ENCODE measurements at regions of chr10 and their contacts with region 1.

Region 1: GRCh38 chr10:110279407-110279986 is 25.2 kb downstream of the SMNDC1 start:
- DNase-seq: no peak

Region 2: DNA sequence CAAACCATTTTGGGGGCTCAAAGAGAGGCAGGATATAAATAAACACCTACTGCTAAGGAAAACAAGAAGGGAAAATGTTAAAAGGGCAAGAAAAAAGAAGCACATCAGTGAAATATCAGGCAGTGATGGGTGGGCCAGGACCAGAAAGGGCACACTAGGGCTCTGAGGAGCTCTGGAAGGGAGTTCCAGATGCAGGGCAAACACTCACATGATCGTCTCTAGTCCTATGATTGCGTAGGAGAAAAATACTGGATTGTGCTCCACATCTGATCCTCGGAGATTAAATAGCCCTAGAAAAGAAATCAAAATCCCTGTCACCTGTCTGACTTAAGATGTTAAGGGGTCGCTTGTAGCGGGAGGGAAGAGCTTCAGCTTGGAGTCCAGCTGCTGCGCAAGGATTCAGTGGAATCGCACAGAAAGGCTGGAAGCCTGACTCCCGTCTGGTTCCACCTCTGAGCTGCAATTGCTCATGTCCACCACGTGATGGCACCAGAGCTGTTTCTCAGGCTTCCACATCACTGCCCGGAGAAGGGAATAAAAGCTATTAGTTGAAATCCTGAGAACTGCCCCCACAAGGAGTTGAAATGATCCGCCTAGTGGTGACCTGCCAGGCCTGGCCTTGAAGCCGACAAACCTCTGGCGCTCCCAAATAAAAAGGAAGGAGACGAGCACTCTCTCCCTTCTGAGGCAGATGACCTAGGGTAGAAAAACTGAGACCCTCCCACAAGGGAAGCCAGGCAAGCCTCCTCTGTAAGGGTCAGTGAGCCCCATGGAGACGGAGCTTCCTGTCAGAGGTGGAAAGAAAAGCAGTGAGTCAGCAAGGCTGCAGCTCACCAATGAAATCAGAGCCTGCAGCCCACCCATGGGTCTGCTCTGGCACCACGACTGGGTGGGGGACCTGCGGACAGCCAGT is 395.4 kb before region 1 on chr10:
- intact Hi-C with region 1: loop called (anchors 2 kb)
- DNase-seq: peak; percentile 86

Region 3: DNA sequence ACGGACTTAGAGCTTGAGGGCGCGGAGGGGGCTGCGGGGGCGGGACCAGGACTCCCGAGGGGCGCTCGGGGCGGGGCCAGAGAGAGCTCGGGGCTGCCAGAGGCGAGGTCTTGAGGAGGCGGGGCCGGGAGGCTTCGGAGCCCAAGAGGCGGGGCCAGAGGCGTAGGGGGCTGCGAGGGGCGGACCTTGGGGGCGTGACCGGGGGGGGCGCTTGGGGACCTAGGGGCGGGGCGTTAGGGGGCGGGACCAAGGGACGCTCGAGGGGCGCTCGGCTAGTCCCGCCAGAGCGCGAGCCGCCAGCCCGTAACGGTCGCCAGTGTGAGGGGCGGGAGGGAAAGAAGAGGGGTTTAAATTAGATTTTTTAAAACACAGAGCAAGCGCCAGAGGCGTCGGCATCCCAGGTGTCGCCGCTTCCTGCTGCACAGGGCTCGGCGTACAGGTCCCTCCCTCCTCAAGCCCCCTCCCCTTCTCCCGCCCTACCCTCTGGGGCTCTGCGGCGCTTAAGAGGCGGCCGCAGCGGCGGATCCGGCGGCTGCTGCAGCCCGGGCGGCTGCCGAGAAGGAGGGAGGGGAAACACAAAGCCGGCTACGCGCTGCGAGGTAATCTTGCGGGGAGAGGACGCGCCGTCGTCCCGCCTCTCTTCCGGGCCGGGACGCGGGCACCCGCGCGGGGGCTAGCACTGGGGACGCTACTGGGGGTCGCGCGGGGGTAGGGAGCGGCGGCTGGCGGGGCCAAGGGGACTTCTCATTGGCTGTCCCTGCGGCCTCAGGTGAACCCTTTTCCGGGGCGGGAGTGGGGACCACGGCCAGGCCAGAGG is 271.6 kb before region 1 on chr10 and contains the start of gene ADD3:
- intact Hi-C with region 1: loop called (anchors 10 kb)
- DNase-seq: peak; percentile 97
- total RNA-seq, gene ADD3: 77.2 TPM

Region 4: GRCh38 chr10:110138197-110138812 is 141.2 kb before region 1 on chr10:
- intact Hi-C with region 1: loop called (anchors 2 kb)
- DNase-seq: no peak

Measured in cardiac septum (tissue), 1 donor.